Posterior cingulate gyrus (tissue), 11 donors: ENCODE measurements at regions of chr12 and their contacts with region 1.

Region 1: GRCh38 chr12:33994857-33995808 is 27.2 kb upstream of the ALG10 start:
- DNase-seq: no peak

Region 2: DNA sequence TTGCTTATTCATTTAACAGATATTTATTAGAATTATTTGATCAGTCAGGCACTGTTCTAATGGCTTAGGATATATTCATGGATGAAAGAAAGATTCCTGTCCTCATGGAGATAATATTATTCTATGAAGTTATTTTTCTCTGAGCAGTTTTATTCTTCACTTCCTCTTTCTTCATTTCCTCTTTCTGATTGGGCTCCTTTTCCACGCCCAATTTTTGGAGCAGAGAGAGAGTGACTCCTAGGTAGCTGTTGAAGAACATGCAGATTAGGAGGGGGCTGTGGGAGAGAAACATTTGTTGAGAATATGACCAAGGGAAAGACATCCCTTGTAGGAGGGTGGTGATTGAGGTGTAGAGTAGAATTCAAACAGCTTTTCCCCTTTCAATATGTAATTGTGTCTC is 1233.4 kb before region 1 on chr12:
- intact Hi-C with region 1: loop called (anchors 10 kb)
- DNase-seq: no peak

Region 3: DNA sequence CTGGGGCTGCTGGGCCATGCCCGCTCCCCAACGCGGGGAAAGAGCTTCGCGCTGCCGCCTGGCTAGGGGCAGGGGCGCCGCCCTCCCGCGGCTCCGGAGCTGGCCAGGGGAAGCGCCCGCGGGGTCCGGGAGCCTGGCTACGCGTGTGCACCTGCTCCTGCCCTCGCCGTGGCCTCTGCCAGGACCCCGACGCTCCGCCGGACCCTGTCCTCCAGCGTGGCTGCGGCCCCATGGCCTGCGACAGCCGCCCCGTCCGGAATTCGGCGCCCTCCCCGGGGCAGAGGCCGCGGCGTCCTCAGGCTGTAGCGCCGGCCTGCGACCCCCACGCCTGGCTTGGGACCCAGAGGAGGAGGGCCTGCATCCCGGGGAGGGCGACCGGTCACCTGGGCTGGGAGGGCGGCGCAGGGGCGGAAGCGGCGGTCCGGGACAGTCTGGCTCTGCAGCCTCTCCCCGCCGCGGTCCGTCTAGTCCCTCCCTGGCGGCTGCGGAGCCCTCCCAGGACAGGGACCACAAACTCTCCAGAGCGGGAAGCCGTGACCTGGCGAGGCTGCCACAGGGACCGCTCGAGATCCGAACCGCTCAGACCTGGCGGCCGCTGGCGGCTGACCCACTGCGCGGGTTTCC is 112.8 kb after region 1 on chr12:
- intact Hi-C with region 1: no loop called
- DNase-seq: peak in 2 of 10 donors; percentile 76 to 78